ENCODE measurements at regions of chr15 and their contacts with region 1.

Region 1: DNA sequence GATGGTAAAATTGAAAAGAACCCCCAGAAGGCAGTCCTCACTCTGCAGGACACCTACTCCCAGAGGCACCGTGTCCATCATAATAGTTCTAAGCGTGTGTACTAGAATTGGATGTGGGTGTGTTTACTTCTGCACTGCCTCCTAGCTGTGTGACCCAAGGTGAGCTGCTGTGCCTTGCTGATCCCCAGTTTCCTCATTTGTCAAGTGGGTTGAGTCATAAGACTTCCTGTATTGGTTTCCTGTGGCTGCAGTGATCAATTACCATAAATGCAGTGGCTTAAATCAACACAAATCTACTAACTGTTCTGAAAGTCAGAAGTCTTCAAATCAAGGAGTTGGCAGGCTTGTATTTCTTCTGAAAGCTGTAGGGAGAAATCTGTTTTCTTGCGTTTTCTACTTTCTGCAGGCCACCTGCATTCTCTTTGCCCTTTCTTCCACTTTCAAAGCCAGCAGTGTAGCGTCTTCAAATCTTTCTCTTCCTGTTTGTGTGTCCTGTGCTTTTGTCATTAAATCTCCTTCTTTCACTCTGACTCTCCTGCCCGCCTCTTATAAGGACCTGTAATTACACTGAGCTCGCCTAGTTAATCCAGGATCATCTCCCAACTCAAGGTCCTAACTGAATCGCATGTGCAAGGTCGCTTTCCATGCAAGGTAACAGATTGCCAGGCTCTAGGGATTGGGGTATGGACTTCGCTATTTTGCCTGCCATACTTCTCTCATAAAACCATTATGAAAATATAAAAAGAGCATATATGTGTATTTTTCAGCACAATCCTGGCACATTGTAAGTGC is 59.0 kb downstream of the RORA start:
- DNase-seq: peak; percentile 45
- ATAC-seq: peak; percentile 89
- H3K4me3 Mint-ChIP-seq: no peak overlapping the region
- H3K27ac Mint-ChIP-seq: peak overlapping the region; percentile 44
- H3K4me1 Mint-ChIP-seq: peaks cover 17% of the 10 kb centered on the region
- H3K27me3 Mint-ChIP-seq: peaks cover 9% of the 10 kb centered on the region

Region 2: GRCh38 chr15:61621146-61621545 is 451.0 kb after region 1 on chr15:
- CTCF ChIA-PET with region 1: interaction called, 3 read pairs
- POLR2A ChIA-PET with region 1: no interaction called
- intact Hi-C with region 1: loop called in 1 of 2 experiments (anchors 2 kb)
- DNase-seq: peak; percentile 55
- ATAC-seq: no peak
- H3K4me3 Mint-ChIP-seq: no peak overlapping the region
- H3K27ac Mint-ChIP-seq: no peak overlapping the region
- H3K4me1 Mint-ChIP-seq: no peaks in the 10 kb centered on the region
- H3K27me3 Mint-ChIP-seq: peaks cover 3% of the 10 kb centered on the region